H1 (cell line): ENCODE measurements at regions of chr5 and their contacts with region 1.

Region 1: GRCh38 chr5:4295663-4296339 is 700.2 kb downstream of the IRX1 start:
- DNase-seq: peak; percentile 13 to 69
- H3K4me3 ChIP-seq: no peak overlapping the region
- H3K27ac ChIP-seq: no peak overlapping the region
- H3K4me1 ChIP-seq: peaks cover 0 to 2% (median 2%) of the 10 kb centered on the region in 4 experiments; a peak in 4 of 7 replicates
- H3K27me3 ChIP-seq: no peaks in the 10 kb centered on the region; a peak in 1 of 7 replicates
- CTCF ChIP-seq: peak; percentile 58 to 72 (median 71)
- EP300 ChIP-seq: no peak
- POLR2A ChIP-seq: no peak
- RAD21 ChIP-seq: peak; percentile 91 to 96

Region 2: DNA sequence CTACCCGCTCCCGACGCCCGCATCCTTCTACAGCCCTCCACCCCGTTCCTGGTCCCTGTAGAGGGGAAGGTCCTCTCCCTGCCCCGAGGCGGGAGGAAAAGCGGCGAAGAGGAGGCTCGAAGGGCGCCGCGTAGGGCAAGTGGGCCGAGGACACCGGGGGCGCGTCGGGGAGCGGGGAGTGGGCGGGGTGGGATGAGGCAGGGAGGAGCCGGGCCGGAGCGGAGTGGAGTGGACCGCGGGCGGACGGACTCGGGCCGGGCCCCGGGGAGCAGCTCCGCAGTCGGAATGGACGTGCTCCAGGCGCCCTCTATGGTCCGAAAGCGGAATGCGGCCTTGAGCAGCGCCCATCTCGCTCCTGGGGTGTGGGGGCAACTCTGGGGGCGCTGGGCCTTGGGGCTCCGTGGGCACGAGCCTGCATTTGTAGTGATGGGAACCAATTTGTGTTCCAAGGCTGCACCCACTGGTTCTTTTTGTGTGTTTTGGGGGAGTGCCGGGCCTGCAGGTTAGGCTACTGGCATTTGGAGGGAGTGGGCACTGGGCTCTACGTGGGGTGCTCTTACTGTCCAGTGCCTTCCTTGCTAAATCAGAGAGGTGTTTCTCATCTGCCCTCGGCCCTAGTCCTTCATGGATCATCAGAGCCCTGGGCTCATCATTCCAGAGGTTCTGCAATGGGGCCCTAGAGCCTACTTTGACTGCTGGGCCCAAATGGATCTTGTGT is 692.9 kb before region 1 on chr5:
- CTCF ChIA-PET with region 1: interaction called, 10 read pairs
- POLR2A ChIA-PET with region 1: no interaction called
- DNase-seq: peak in 1 of 2 experiments; percentile 87
- H3K4me3 ChIP-seq: peak overlapping the region; percentile 24 to 69 (median 34); a peak in 7 of 8 replicates
- H3K27ac ChIP-seq: no peak overlapping the region
- H3K4me1 ChIP-seq: peaks cover 0 to 25% (median 16%) of the 10 kb centered on the region in 4 experiments; a peak in 6 of 7 replicates
- H3K27me3 ChIP-seq: peaks cover 61 to 96% (median 82%) of the 10 kb centered on the region in 4 experiments
- CTCF ChIP-seq: peak in 2 of 3 experiments; percentile 59 to 64; a peak in 3 of 4 replicates
- EP300 ChIP-seq: no peak
- POLR2A ChIP-seq: no peak
- RAD21 ChIP-seq: peak; percentile 67 to 72

Region 3: DNA sequence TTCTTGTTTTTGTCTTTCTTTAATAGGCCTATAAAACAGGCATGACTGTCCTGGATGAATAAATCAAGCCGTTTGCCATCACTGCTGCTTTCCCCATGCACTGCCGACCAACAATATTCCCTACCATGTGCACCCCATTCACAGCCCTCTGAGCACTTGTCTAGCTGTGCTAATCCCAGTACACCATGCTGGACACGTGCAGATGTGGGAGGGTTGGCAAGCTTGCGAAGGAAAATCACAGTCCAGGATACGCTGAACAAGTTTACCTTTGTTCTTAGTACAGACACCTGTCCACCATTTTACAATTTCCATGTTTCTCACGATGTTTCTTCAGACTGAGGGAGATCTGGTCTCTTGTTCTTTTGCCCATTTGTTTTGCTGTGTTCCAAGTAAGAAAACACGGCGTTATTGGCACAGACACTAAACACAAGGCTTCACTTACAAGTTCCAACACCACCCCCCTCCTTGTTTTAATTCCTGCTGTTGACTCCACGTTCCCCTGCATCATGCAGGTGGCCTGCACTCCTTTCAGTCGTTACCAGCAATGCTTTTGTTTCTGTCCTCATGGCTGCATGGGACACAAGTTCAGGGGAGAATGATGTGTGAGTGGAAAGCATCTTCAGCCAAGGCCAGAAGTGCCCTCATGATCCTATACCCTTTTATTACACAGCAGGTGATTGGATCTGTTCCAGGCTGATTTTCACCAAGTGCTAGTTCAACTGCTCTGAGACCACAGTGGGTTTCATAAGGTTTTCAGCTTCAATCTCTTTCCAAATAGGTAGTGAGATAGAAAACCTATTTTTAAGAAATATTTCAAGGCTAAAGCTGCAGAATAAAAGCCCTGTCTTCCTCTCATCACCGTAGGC is 91.3 kb before region 1 on chr5:
- CTCF ChIA-PET with region 1: interaction called, 11 read pairs
- POLR2A ChIA-PET with region 1: no interaction called
- DNase-seq: no peak
- H3K4me3 ChIP-seq: no peak overlapping the region
- H3K27ac ChIP-seq: no peak overlapping the region
- H3K4me1 ChIP-seq: peaks cover 3 to 21% (median 13%) of the 10 kb centered on the region in 4 experiments; a peak in 6 of 7 replicates
- H3K27me3 ChIP-seq: no peaks in the 10 kb centered on the region
- CTCF ChIP-seq: no peak
- EP300 ChIP-seq: no peak
- POLR2A ChIP-seq: no peak
- RAD21 ChIP-seq: no peak

Region 4: DNA sequence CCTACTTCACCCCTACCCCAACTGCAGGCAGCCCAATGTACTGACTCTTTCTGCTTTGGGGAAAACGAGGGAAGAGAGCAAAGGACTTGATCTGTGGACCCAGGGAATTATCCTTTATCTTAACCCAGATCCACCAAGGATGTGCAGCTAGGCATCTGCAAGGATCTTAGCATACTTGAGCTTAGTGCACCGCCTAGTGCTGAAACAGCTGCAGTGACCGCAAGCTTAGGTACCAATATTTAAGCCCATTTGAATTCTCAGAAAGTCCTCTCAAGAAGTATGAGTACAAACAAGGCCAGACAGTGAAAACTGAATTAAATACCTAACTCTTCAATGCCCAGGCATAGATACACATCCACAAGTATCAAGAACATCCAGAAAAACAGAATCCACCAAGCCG is 267.6 kb after region 1 on chr5:
- CTCF ChIA-PET with region 1: interaction called, 14 read pairs
- POLR2A ChIA-PET with region 1: no interaction called
- DNase-seq: peak; percentile 25 to 49
- H3K4me3 ChIP-seq: no peak overlapping the region
- H3K27ac ChIP-seq: no peak overlapping the region
- H3K4me1 ChIP-seq: no peaks in the 10 kb centered on the region
- H3K27me3 ChIP-seq: no peaks in the 10 kb centered on the region
- CTCF ChIP-seq: peak; percentile 41 to 94 (median 79)
- EP300 ChIP-seq: no peak
- POLR2A ChIP-seq: no peak
- RAD21 ChIP-seq: peak; percentile 98

Region 5: DNA sequence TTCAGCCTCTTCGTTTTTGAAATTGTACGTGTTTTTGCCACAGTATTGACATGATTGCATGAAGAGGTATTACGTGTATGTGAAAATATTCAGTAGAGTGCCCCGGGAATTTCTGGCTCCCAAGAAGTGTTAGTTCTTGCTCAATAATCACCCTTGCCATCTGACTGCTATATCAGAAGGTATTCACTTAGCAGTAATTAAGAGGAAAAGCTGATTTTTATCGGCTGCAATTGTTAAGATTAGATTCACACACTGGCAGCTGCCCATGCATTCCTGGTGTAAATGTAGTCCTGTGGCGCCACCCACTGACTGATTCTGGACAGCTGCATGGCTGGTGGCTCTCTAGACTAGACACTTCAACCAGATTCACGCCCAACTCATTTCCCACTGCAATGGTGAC is 404.3 kb after region 1 on chr5:
- CTCF ChIA-PET with region 1: interaction called, 11 read pairs
- POLR2A ChIA-PET with region 1: no interaction called
- DNase-seq: peak; percentile 25 to 82
- H3K4me3 ChIP-seq: no peak overlapping the region
- H3K27ac ChIP-seq: no peak overlapping the region
- H3K4me1 ChIP-seq: no peaks in the 10 kb centered on the region
- H3K27me3 ChIP-seq: no peaks in the 10 kb centered on the region
- CTCF ChIP-seq: peak; percentile 80 to 92 (median 83)
- EP300 ChIP-seq: no peak
- POLR2A ChIP-seq: no peak
- RAD21 ChIP-seq: peak; percentile 94 to 96